ENCODE measurements at regions of chr14 and their contacts with region 1.

Region 1: GRCh38 chr14:67599698-67600561 is at the start of gene PIGH:
- DNase-seq: peak; percentile 99
- ATAC-seq: peak; percentile 90
- H3K4me3 Mint-ChIP-seq: peak within 1 kb of the TSS; percentile 96
- H3K27ac Mint-ChIP-seq: peak within 1 kb of the TSS; percentile 95
- H3K4me1 Mint-ChIP-seq: peaks cover 61% of the 10 kb centered on the region
- H3K27me3 Mint-ChIP-seq: no peaks in the 10 kb centered on the region
- CTCF ChIP-seq: no peak
- total RNA-seq, gene PIGH: 21.9 and 26.4 TPM in 2 replicates

Region 2: GRCh38 chr14:67467179-67468080 is 132.5 kb before region 1 on chr14:
- CTCF ChIA-PET with region 1: no interaction called
- POLR2A ChIA-PET with region 1: interaction called, 13 read pairs
- intact Hi-C with region 1: no loop called
- DNase-seq: no peak
- ATAC-seq: no peak
- H3K4me3 Mint-ChIP-seq: no peak overlapping the region
- H3K27ac Mint-ChIP-seq: no peak overlapping the region
- H3K4me1 Mint-ChIP-seq: peaks cover 4% of the 10 kb centered on the region
- H3K27me3 Mint-ChIP-seq: no peaks in the 10 kb centered on the region
- CTCF ChIP-seq: no peak

Region 3: DNA sequence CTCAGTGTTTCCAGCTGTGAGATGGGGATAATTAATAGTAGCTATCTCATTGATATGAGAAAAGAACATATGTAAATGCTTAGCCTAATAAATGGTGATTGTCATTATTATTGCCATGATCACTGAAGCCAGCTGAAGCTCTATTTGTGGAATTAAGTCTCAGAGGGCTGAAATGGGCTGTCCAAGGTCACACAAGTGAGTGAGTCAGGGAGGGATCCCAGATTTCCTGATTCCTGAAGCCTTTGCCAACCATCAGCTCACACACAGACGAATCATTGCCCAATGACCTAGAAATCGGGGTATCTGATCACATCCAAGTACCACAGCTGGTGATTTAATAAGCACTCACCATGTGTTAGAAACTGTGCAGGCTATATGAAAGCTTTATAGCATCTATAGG is 89.8 kb before region 1 on chr14:
- CTCF ChIA-PET with region 1: no interaction called
- POLR2A ChIA-PET with region 1: no interaction called
- intact Hi-C with region 1: no loop called
- DNase-seq: no peak
- ATAC-seq: no peak
- H3K4me3 Mint-ChIP-seq: no peak overlapping the region
- H3K27ac Mint-ChIP-seq: no peak overlapping the region
- H3K4me1 Mint-ChIP-seq: peaks cover 29% of the 10 kb centered on the region
- H3K27me3 Mint-ChIP-seq: no peaks in the 10 kb centered on the region
- CTCF ChIP-seq: no peak

Region 4: GRCh38 chr14:67564236-67564635 is 35.7 kb before region 1 on chr14:
- CTCF ChIA-PET with region 1: no interaction called
- POLR2A ChIA-PET with region 1: no interaction called
- intact Hi-C with region 1: no loop called
- DNase-seq: no peak
- ATAC-seq: no peak
- H3K4me3 Mint-ChIP-seq: no peak overlapping the region
- H3K27ac Mint-ChIP-seq: no peak overlapping the region
- H3K4me1 Mint-ChIP-seq: peaks cover 4% of the 10 kb centered on the region
- H3K27me3 Mint-ChIP-seq: peaks cover 4% of the 10 kb centered on the region
- CTCF ChIP-seq: no peak

Region 5: DNA sequence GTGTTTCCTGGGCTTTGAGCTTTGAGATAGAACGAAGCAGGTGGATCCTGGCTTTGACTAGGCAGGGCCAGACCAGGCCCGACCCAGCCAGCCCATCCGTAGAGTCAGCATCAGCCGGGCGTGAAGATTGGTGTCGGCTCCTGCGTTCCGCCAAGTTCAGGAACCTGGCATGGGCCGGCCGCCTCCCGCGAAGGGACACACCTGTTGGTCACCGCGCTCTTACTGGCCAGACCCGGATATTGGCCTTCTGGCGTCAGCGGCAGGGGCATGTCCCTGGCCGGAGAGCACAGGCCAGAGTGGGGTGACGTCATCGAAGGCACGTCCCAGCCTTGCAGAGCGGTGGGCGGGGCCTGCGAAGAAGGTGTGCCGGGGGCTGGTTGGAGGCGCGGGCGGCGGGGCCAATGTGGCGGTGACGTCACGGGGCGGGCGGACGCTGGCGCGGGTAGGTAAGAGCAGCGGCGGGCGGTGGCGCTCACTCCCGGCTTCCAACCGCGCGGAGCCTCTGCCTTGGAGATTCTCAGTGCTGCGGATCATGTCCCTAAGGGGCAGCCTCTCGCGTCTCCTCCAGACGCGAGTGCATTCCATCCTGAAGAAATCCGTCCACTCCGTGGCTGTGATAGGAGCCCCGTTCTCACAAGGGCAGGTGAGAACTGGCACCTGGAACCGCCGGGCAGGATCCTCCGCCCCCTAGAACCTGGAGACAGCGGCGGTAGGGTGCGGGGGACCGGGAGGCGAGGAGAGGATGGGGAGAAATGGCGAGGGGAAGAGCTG is 19.7 kb after region 1 on chr14 and contains the start of gene ARG2:
- CTCF ChIA-PET with region 1: interaction called, 10 read pairs
- POLR2A ChIA-PET with region 1: interaction called, 31 read pairs
- intact Hi-C with region 1: loop called (anchors 1 kb)
- DNase-seq: peak; percentile 95
- ATAC-seq: peak; percentile 94
- H3K4me3 Mint-ChIP-seq: peak within 1 kb of the TSS; percentile 88
- H3K27ac Mint-ChIP-seq: peak within 1 kb of the TSS; percentile 79
- H3K4me1 Mint-ChIP-seq: peaks cover 25% of the 10 kb centered on the region
- H3K27me3 Mint-ChIP-seq: no peaks in the 10 kb centered on the region
- CTCF ChIP-seq: no peak
- total RNA-seq, gene ARG2: 0.40 and 0.46 TPM in 2 replicates

Region 6: GRCh38 chr14:67674481-67675169 is 74.7 kb after region 1 on chr14 and contains the start of gene VTI1B:
- CTCF ChIA-PET with region 1: interaction called, 3 read pairs
- POLR2A ChIA-PET with region 1: interaction called, 13 read pairs
- intact Hi-C with region 1: loop called (anchors 1 kb)
- DNase-seq: peak; percentile 86
- ATAC-seq: peak; percentile 93
- H3K4me3 Mint-ChIP-seq: peak within 1 kb of the TSS; percentile 89
- H3K27ac Mint-ChIP-seq: peak within 1 kb of the TSS; percentile 89
- H3K4me1 Mint-ChIP-seq: peaks cover 36% of the 10 kb centered on the region
- H3K27me3 Mint-ChIP-seq: no peaks in the 10 kb centered on the region
- CTCF ChIP-seq: no peak
- total RNA-seq, gene VTI1B: 76.3 and 78.9 TPM in 2 replicates

Region 7: DNA sequence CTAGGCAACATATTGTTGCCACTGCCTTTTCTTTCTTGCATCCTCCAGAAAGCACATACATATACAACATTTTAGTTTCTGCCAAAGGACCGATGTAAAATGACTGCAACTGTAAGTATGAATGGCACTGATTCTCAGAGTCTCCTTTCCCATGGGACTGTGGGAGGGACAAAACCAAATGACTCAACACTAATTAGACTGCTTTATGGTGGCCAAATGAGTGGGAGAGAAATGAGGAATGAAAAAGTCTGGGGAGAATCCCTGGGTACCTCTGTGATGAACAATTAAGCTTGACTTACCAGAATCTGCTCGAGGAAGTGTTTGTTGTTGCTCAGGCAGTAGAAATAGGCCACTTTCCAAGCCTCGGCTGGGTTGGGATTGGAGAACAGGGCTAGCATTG is 206.3 kb after region 1 on chr14:
- CTCF ChIA-PET with region 1: no interaction called
- POLR2A ChIA-PET with region 1: no interaction called
- intact Hi-C with region 1: no loop called
- DNase-seq: no peak
- ATAC-seq: no peak
- H3K4me3 Mint-ChIP-seq: no peak overlapping the region
- H3K27ac Mint-ChIP-seq: no peak overlapping the region
- H3K4me1 Mint-ChIP-seq: peaks cover 3% of the 10 kb centered on the region
- H3K27me3 Mint-ChIP-seq: no peaks in the 10 kb centered on the region
- CTCF ChIP-seq: no peak

Region 8: GRCh38 chr14:67816326-67817002 is 216.5 kb after region 1 on chr14 and contains the start of gene ZFYVE26:
- CTCF ChIA-PET with region 1: interaction called, 3 read pairs
- POLR2A ChIA-PET with region 1: interaction called, 3 read pairs
- intact Hi-C with region 1: loop called (anchors 5 kb)
- DNase-seq: peak; percentile 70
- ATAC-seq: peak; percentile 85
- H3K4me3 Mint-ChIP-seq: peak within 1 kb of the TSS; percentile 94
- H3K27ac Mint-ChIP-seq: peak within 1 kb of the TSS; percentile 95
- H3K4me1 Mint-ChIP-seq: peaks cover 63% of the 10 kb centered on the region
- H3K27me3 Mint-ChIP-seq: no peaks in the 10 kb centered on the region
- CTCF ChIP-seq: no peak
- total RNA-seq, gene ZFYVE26: 40.7 and 41.1 TPM in 2 replicates